Ascending aorta (tissue), 2 donors: ENCODE measurements at regions of chr11 and their contacts with region 1.

Region 1: GRCh38 chr11:18115360-18116127 is 9.7 kb upstream of the SAAL1 start:
- DNase-seq: peak in 1 of 2 donors; percentile 69
- H3K4me3 ChIP-seq: no peak overlapping the region
- H3K27ac ChIP-seq: no peak overlapping the region
- H3K4me1 ChIP-seq: no peaks in the 10 kb centered on the region
- H3K27me3 ChIP-seq: no peaks in the 10 kb centered on the region
- CTCF ChIP-seq: peak; percentile 58 to 85 (median 75)

Region 2: GRCh38 chr11:17730608-17731462 is 384.7 kb before region 1 on chr11:
- intact Hi-C with region 1: loop called (anchors 10 kb)
- DNase-seq: peak; percentile 26 to 80
- H3K4me3 ChIP-seq: no peak overlapping the region
- H3K27ac ChIP-seq: no peak overlapping the region
- H3K4me1 ChIP-seq: peaks cover 4 to 9% of the 10 kb centered on the region in 2 donors
- H3K27me3 ChIP-seq: peaks cover 4% of the 10 kb centered on the region
- CTCF ChIP-seq: peak; percentile 70 to 89 (median 84)

Region 3: GRCh38 chr11:18731949-18732821 is 616.6 kb after region 1 on chr11:
- intact Hi-C with region 1: loop called (anchors 2 kb)
- DNase-seq: peak in 1 of 2 donors; percentile 77
- H3K4me3 ChIP-seq: no peak overlapping the region
- H3K27ac ChIP-seq: no peak overlapping the region
- H3K4me1 ChIP-seq: no peaks in the 10 kb centered on the region
- H3K27me3 ChIP-seq: no peaks in the 10 kb centered on the region
- CTCF ChIP-seq: peak; percentile 79 to 98 (median 98)